Endothelial cell of umbilical vein (primary cell): ENCODE measurements at regions of chr3 and their contacts with region 1.

Region 1: DNA sequence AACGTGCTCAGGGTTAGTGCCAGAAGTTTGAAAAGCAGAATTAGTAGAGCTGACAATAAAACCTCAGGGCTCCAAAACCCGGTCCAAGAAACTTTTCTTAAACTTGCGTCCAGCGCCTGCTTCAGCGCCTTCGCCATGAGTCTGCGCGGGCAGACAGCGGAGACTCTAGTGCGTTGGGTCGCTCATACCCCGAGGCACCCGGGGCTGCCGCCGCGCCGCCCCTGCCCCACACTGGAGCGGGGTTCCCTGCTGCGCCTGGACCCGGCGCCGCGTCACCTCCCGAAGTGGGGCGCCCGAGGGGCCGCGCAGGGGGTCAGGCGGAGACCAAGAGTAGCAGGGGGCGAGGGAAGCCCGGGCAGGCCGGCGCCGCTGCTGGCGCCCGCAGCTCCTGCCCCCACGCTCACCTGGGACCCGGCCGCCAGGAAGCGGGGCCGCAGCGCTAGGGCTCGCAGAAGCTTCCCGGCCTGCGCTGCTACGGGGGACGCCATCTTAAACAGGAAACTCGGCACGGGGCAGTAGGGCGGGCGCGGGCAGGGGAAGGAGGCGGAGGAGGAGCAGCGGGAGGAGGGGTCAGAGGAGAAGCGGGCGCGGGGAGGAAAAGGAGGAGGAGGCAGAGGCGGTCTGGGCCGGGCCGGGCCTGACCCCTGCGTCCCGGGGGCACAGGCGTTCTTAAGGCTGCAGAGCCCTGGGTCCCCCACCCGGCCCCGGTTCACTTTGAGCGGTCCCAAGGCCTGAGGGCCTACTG is at the start of gene SUCLG2:
- DNase-seq: peak; percentile 83
- H3K4me3 ChIP-seq: peak within 1 kb of the TSS; percentile 49 to 90 (median 75)
- H3K27ac ChIP-seq: peak within 1 kb of the TSS; percentile 60
- H3K4me1 ChIP-seq: peaks cover 9% of the 10 kb centered on the region
- H3K27me3 ChIP-seq: no peaks in the 10 kb centered on the region
- CTCF ChIP-seq: no peak
- POLR2A ChIP-seq: peak; percentile 88
- total RNA-seq, gene SUCLG2: 35.9 and 38.3 TPM in 2 replicates

Region 2: DNA sequence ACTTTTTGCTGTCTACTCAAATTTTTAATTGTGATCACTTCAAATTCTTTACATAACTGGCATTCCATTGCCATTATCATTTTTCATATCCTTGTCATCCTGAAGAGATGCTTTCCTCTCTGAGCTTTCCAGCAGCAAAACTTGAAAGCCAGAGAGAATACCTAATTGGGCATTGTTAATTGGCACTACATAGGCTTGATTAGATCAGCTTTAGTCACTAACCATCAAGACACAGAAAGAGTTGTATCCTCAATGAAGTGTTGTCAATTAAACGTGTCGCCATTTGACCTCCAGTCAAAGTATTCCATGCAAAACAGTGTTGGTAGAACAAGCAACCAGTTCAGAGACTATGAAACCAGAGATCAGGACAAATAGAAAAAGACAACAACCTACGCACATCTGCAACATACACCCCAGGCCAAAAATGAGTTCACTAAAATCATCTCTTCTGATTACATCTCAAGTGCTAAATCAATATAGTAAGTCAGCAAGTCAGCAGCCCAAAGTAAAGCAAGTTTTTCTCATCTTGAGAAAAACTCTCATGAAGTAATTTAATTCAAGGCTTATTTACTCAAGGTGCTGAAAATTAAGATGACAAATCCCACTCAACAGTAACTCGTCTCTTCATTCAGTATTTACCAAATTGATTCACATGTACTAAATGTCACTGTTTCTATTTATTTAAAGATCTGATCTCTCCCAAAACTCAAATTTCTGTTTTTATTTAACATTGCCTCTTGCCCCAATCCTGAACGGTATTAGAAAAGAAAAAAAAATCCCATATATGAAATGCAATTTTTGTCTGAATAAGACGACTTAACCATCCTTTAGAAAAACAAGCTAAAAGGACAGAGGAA is 122.8 kb before region 1 on chr3:
- CTCF ChIA-PET with region 1: no interaction called
- POLR2A ChIA-PET with region 1: no interaction called
- dilution Hi-C with region 1: no loop called
- intact Hi-C with region 1: loop called (anchors 1 kb)
- DNase-seq: peak; percentile 34
- H3K4me3 ChIP-seq: no peak overlapping the region
- H3K27ac ChIP-seq: no peak overlapping the region
- H3K4me1 ChIP-seq: peaks cover 31% of the 10 kb centered on the region
- H3K27me3 ChIP-seq: no peaks in the 10 kb centered on the region
- CTCF ChIP-seq: no peak
- POLR2A ChIP-seq: no peak

Region 3: GRCh38 chr3:67610458-67610857 is 43.8 kb before region 1 on chr3:
- CTCF ChIA-PET with region 1: interaction called, 5 read pairs
- POLR2A ChIA-PET with region 1: no interaction called
- dilution Hi-C with region 1: no loop called
- intact Hi-C with region 1: loop called (anchors 2 kb)
- DNase-seq: peak; percentile 79
- H3K4me3 ChIP-seq: no peak overlapping the region
- H3K27ac ChIP-seq: peak overlapping the region; percentile 60
- H3K4me1 ChIP-seq: peaks cover 20% of the 10 kb centered on the region
- H3K27me3 ChIP-seq: no peaks in the 10 kb centered on the region
- CTCF ChIP-seq: no peak
- POLR2A ChIP-seq: no peak

Region 4: DNA sequence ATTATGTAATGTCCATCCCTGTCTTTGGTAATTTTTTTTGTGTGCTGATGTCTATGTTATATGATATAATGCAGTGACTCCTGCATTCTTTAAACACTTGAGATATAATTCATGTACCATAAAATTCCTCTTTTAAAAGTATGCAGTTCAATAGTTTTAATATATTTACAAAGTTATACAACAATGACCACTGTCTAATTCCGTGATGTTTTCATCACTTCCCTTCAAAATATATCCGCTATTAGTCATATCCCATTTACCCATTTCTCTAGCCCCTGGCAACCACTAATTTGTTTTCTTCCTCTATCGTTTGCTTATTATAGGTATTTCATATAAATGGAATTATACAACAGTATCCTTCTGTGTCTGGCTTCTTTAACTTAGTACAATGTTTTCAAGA is 65.1 kb after region 1 on chr3:
- CTCF ChIA-PET with region 1: no interaction called
- POLR2A ChIA-PET with region 1: no interaction called
- dilution Hi-C with region 1: no loop called
- intact Hi-C with region 1: loop called (anchors 1 kb)
- DNase-seq: peak; percentile 55
- H3K4me3 ChIP-seq: no peak overlapping the region
- H3K27ac ChIP-seq: peak overlapping the region; percentile 73
- H3K4me1 ChIP-seq: peaks cover 13% of the 10 kb centered on the region
- H3K27me3 ChIP-seq: no peaks in the 10 kb centered on the region
- CTCF ChIP-seq: no peak
- POLR2A ChIP-seq: no peak

Region 5: DNA sequence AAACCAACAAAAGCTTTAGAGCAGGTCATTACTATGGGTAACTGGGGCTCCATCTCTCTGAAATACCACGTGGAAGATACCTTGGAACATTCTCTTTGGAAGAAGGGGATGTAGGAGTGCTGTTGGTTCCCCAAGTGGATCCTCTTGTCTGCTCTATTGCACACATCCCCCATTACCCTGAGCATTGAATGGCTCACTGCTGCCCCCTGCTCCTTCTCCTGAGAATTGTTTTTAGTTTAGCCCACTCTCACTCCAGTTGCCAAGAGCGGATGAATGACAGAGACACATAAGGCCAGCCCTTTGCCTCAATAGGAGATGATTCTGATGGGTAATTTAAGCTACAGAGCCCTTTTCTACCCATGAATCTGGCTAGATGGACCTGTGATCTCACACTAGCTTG is 135.8 kb after region 1 on chr3:
- CTCF ChIA-PET with region 1: no interaction called
- POLR2A ChIA-PET with region 1: no interaction called
- dilution Hi-C with region 1: no loop called
- intact Hi-C with region 1: loop called (anchors 1 kb)
- DNase-seq: peak; percentile 68
- H3K4me3 ChIP-seq: no peak overlapping the region
- H3K27ac ChIP-seq: no peak overlapping the region
- H3K4me1 ChIP-seq: no peaks in the 10 kb centered on the region
- H3K27me3 ChIP-seq: peaks cover 0 to 2% of the 10 kb centered on the region in 2 experiments
- CTCF ChIP-seq: peak; percentile 62 to 67
- POLR2A ChIP-seq: no peak